ENCODE measurements at regions of chr7 and their contacts with region 1.

Region 1: GRCh38 chr7:71808115-71808514 is 604.0 kb downstream of the CALN1 start:
- DNase-seq: no peak

Region 2: GRCh38 chr7:71871446-71871845 is 63.3 kb after region 1 on chr7:
- intact Hi-C with region 1: loop called in 1 of 2 experiments (anchors 2 kb)
- DNase-seq: no peak

Region 3: GRCh38 chr7:72467237-72467636 is 659.1 kb after region 1 on chr7:
- intact Hi-C with region 1: no loop called
- DNase-seq: no peak

Measured in posterior vena cava (tissue), 2 donors.